Activated T-helper 1 cell treated with anti-CD3 and anti-CD28 coated beads, Interleukin-12 subunit alpha, Interleukin-12 subunit beta, Interleukin-2, Interleukin-4 antibody, amounts not matched to agents 30 ng/mL and 10 ng/mL and 1 ng/mL, durations not matched to agents 14 hours and 24 hours and 36 hours (primary cell): ENCODE measurements at regions of chr5 and their contacts with region 1.

Region 1: GRCh38 chr5:134070725-134071613 is 43.5 kb upstream of the TCF7 start:
- DNase-seq: no peak
- H3K4me3 Mint-ChIP-seq: peak overlapping the region; percentile 77
- H3K27ac Mint-ChIP-seq: peak overlapping the region; percentile 91
- H3K4me1 Mint-ChIP-seq: peaks cover 52% of the 10 kb centered on the region
- H3K27me3 Mint-ChIP-seq: peaks cover 7% of the 10 kb centered on the region

Region 2: GRCh38 chr5:134004592-134005375 is 66.2 kb before region 1 on chr5 and contains the start of gene VDAC1:
- intact Hi-C with region 1: loop called (anchors 2 kb)
- DNase-seq: peak; percentile 78
- H3K4me3 Mint-ChIP-seq: peak within 1 kb of the TSS; percentile 93
- H3K27ac Mint-ChIP-seq: peak within 1 kb of the TSS; percentile 97
- H3K4me1 Mint-ChIP-seq: peaks cover 53% of the 10 kb centered on the region
- H3K27me3 Mint-ChIP-seq: peaks cover 2% of the 10 kb centered on the region
- total RNA-seq, gene VDAC1: 440 and 442 TPM in 2 replicates

Region 3: GRCh38 chr5:134053840-134054338 is 17.1 kb before region 1 on chr5:
- intact Hi-C with region 1: loop called (anchors 2 kb)
- DNase-seq: no peak
- H3K4me3 Mint-ChIP-seq: no peak overlapping the region
- H3K27ac Mint-ChIP-seq: no peak overlapping the region
- H3K4me1 Mint-ChIP-seq: peaks cover 13% of the 10 kb centered on the region
- H3K27me3 Mint-ChIP-seq: peaks cover 15% of the 10 kb centered on the region

Region 4: GRCh38 chr5:134101686-134102439 is 30.9 kb after region 1 on chr5:
- intact Hi-C with region 1: loop called (anchors 1 kb)
- DNase-seq: peak; percentile 58
- H3K4me3 Mint-ChIP-seq: peak overlapping the region; percentile 26
- H3K27ac Mint-ChIP-seq: no peak overlapping the region
- H3K4me1 Mint-ChIP-seq: peaks cover 59% of the 10 kb centered on the region
- H3K27me3 Mint-ChIP-seq: peaks cover 36% of the 10 kb centered on the region

Region 5: GRCh38 chr5:134132372-134133034 is 61.5 kb after region 1 on chr5:
- intact Hi-C with region 1: loop called (anchors 1 kb)
- DNase-seq: peak; percentile 74
- H3K4me3 Mint-ChIP-seq: peak overlapping the region; percentile 64
- H3K27ac Mint-ChIP-seq: peak overlapping the region; percentile 86
- H3K4me1 Mint-ChIP-seq: peaks cover 89% of the 10 kb centered on the region
- H3K27me3 Mint-ChIP-seq: peaks cover 15% of the 10 kb centered on the region

Region 6: DNA sequence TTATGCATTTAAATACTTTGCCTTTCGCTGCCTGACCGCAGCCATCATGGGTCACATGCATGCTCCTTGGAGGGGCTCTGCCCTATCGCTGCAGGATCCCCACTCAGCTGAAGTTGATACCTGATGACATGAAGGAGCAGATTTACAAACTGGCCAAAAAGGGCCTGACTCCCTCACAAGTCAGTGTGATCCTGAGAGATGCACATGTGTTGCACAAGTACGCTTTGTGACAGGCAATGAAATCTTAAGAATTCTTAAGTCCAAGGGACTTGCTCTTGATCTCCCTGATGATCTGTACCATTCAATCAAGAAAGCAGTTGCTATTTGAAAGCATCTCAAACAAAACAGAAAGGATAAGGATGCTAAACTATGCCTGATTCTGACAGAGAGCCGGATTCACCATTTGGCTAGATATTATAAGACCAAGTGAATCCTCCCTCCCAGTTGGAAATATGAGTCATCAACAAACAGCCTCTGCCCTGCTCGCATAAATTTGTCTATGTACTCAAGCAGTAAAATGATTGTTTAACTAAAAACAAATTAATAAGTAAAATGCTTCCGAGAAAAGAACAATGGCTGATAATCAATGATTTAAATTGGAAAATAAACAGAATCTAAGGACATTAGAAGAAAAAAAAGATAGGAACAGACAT is 196.5 kb after region 1 on chr5:
- intact Hi-C with region 1: no loop called
- DNase-seq: no peak
- H3K4me3 Mint-ChIP-seq: no peak overlapping the region
- H3K27ac Mint-ChIP-seq: no peak overlapping the region
- H3K4me1 Mint-ChIP-seq: no peaks in the 10 kb centered on the region
- H3K27me3 Mint-ChIP-seq: peaks cover 23% of the 10 kb centered on the region

Region 7: DNA sequence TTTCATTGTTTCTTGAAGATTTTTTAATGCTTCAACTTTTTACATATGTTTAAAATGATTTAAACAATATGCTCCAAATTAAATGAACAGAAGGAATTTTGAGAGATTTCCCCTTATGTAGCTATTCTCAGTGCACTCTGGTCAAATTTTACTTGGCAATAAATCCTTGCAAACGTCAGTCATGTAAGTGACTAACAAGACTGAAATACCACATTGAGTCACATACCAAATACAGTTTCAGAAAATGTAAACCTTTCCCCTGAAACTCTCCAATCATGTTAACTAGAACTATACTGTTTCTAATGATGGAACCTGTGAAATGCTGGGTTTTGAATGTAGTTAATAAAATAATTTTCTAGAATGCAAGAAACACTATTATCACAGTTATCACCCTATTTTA is 532.1 kb after region 1 on chr5:
- intact Hi-C with region 1: loop called (anchors 1 kb)
- DNase-seq: no peak
- H3K4me3 Mint-ChIP-seq: peak overlapping the region; percentile 6
- H3K27ac Mint-ChIP-seq: peak overlapping the region; percentile 36
- H3K4me1 Mint-ChIP-seq: peaks cover 44% of the 10 kb centered on the region
- H3K27me3 Mint-ChIP-seq: no peaks in the 10 kb centered on the region